Left cardiac atrium (tissue), 4 donors: ENCODE measurements at regions of chr7 and their contacts with region 1.

Region 1: GRCh38 chr7:98284335-98285036 is 3.0 kb downstream of the BRI3 start:
- DNase-seq: peak; percentile 84
- ATAC-seq: peak; percentile 38 to 60

Region 2: GRCh38 chr7:98251841-98252639 is 32.4 kb before region 1 on chr7 and contains the start of gene TECPR1:
- intact Hi-C with region 1: loop called in 1 of 2 experiments (anchors 5 kb)
- DNase-seq: peak; percentile 96
- ATAC-seq: peak; percentile 99 to 100
- total RNA-seq, gene TECPR1: 20.9 to 23.4 TPM

Region 3: GRCh38 chr7:98569691-98570337 is 285.3 kb after region 1 on chr7:
- intact Hi-C with region 1: no loop called
- DNase-seq: peak; percentile 22
- ATAC-seq: peak in 1 of 2 donors; percentile 51